Activated CD4-positive, alpha-beta memory T cell treated with anti-CD3 and anti-CD28 coated beads, Interleukin-2, amount 10 ng/mL, durations not matched to agents 7 days and 5 days (primary cell): ENCODE measurements at regions of chr12 and their contacts with region 1.

Region 1: GRCh38 chr12:31896514-31897039 is 62.6 kb upstream of the RESF1 start:
- DNase-seq: peak; percentile 91
- H3K4me3 Mint-ChIP-seq: peak overlapping the region; percentile 48
- H3K27ac Mint-ChIP-seq: peak overlapping the region; percentile 97
- H3K4me1 Mint-ChIP-seq: peaks cover 53% of the 10 kb centered on the region
- H3K27me3 Mint-ChIP-seq: no peaks in the 10 kb centered on the region

Region 2: GRCh38 chr12:31928246-31929026 is 31.9 kb after region 1 on chr12:
- CTCF ChIA-PET with region 1: interaction called, 7 read pairs
- POLR2A ChIA-PET with region 1: interaction called, 15 read pairs
- DNase-seq: peak; percentile 42
- H3K4me3 Mint-ChIP-seq: peak overlapping the region; percentile 72
- H3K27ac Mint-ChIP-seq: peak overlapping the region; percentile 95
- H3K4me1 Mint-ChIP-seq: peaks cover 42% of the 10 kb centered on the region
- H3K27me3 Mint-ChIP-seq: no peaks in the 10 kb centered on the region

Region 3: DNA sequence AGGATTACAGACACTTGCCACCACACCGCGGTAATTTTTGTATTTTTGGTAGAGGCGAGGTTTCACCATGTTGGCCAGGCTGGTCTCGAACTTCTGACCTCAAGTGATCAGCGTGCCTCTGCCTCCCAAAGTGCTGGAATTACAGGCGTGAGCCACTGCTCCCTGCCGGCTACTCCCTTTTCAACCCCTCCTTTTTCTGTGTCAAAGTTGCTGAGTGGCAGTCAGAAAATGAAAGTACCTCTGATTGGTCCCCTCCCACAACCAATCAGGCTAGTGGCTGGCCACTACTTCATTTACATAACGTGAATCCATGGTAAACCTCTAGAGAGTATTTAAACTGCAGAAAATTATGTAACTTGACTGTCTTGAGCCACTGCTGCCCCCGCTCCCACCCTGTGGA is 68.5 kb after region 1 on chr12:
- CTCF ChIA-PET with region 1: interaction called, 7 read pairs
- POLR2A ChIA-PET with region 1: interaction called, 74 read pairs
- DNase-seq: peak; percentile 42
- H3K4me3 Mint-ChIP-seq: peak overlapping the region; percentile 91
- H3K27ac Mint-ChIP-seq: peak overlapping the region; percentile 79
- H3K4me1 Mint-ChIP-seq: peaks cover 82% of the 10 kb centered on the region
- H3K27me3 Mint-ChIP-seq: no peaks in the 10 kb centered on the region